Activated T-helper 2 cell treated with anti-CD3 and anti-CD28 coated beads, Interferon-gamma antibody, Interleukin-2, Interleukin-4, amounts not matched to agents 10 μg/mL and 5 μg/mL and 100 μg/mL, durations not matched to agents 14 hours and 24 hours and 36 hours (primary cell): ENCODE measurements at regions of chr9 and their contacts with region 1.

Region 1: GRCh38 chr9:76419782-76420380 is 25.7 kb upstream of the RFK start:
- DNase-seq: no peak
- H3K4me3 Mint-ChIP-seq: no peak overlapping the region
- H3K27ac Mint-ChIP-seq: no peak overlapping the region
- H3K4me1 Mint-ChIP-seq: peaks cover 40% of the 10 kb centered on the region
- H3K27me3 Mint-ChIP-seq: no peaks in the 10 kb centered on the region

Region 2: GRCh38 chr9:76403352-76403751 is 16.5 kb before region 1 on chr9:
- intact Hi-C with region 1: loop called (anchors 1 kb)
- DNase-seq: peak; percentile 15
- H3K4me3 Mint-ChIP-seq: peak overlapping the region; percentile 58
- H3K27ac Mint-ChIP-seq: peak overlapping the region; percentile 76
- H3K4me1 Mint-ChIP-seq: peaks cover 22% of the 10 kb centered on the region
- H3K27me3 Mint-ChIP-seq: no peaks in the 10 kb centered on the region

Region 3: GRCh38 chr9:76680716-76681425 is 261.0 kb after region 1 on chr9:
- intact Hi-C with region 1: loop called (anchors 1 kb)
- DNase-seq: no peak
- H3K4me3 Mint-ChIP-seq: no peak overlapping the region
- H3K27ac Mint-ChIP-seq: peak overlapping the region; percentile 17
- H3K4me1 Mint-ChIP-seq: peaks cover 8% of the 10 kb centered on the region
- H3K27me3 Mint-ChIP-seq: peaks cover 4% of the 10 kb centered on the region